RWPE1 (cell line): ENCODE measurements at regions of chr12 and their contacts with region 1.

Region 1: DNA sequence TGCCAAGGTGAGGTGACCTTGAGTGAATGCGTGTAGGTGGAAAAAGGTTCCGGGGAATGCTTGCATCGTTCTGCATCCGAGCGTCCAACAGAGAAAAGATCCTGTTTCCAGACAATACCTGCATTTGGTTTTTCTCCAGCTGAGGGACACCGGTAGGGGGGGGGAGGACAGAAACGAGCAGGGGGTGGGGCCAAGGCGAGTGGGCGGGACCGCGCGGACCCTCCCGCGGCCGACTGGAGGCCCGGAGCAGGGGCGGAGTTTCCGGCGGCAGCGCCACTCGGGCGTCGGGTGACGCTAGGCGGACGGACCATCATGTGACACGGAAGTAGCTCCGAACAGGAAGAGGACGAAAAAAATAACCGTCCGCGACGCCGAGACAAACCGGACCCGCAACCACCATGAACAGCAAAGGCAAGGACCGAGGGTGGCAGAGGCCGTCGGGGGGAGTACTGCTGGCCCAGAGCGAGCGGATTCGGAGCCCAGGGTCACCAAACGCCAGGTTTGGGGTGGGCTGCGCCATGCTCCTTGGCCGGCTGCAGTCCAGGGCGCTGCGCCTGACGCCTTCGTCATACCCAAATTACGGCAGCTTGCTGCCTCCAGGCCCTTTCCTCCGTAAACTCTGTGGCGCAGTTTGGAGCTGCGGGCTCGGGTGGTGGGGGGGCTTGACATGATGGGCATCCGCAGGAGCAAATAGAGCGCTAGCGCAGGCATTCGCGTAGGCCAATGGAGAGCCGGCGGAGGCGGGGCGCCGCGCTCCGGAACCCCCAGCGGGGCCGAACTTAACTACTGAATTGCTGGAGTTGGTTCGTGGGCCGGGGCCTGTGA is at the start of gene DAZAP2:
- DNase-seq: peak; percentile 98
- H3K27ac ChIP-seq: peak within 1 kb of the TSS; percentile 97
- CTCF ChIP-seq: peak; percentile 24; the same call in 1 of the 2 replicates

Region 2: GRCh38 chr12:51047655-51048540 is 190.8 kb before region 1 on chr12 and contains the start of gene LETMD1:
- CTCF ChIA-PET with region 1: no interaction called
- POLR2A ChIA-PET with region 1: interaction called, 11 read pairs
- DNase-seq: peak; percentile 98
- H3K27ac ChIP-seq: peak within 1 kb of the TSS; percentile 89
- CTCF ChIP-seq: peak; percentile 94

Region 3: DNA sequence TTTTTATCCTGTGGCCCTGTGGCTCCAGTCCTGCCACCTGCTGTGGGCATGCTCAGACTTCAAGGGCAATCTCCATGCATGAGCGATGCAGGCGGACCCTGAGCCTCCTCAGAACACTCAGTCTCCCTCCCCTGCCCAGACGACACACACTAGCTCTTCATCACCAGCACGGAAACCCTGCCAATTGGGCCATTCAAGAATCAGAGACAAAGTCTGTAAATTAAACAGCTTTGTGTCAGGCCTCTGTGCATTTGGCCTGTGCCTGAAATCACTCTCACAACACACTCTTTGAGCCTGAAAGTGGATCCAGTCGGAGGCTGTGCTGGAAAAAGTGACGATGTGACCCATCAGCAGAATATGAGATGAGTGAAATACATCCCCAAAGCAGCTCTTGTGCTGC is 33.4 kb before region 1 on chr12:
- CTCF ChIA-PET with region 1: no interaction called
- POLR2A ChIA-PET with region 1: no interaction called
- DNase-seq: no peak
- H3K27ac ChIP-seq: no peak overlapping the region; the same call in 1 of the 2 replicates
- CTCF ChIP-seq: no peak

Region 4: GRCh38 chr12:51281202-51281924 is 42.6 kb after region 1 on chr12:
- CTCF ChIA-PET with region 1: interaction called, 10 read pairs
- POLR2A ChIA-PET with region 1: no interaction called
- DNase-seq: peak; percentile 60
- H3K27ac ChIP-seq: no peak overlapping the region
- CTCF ChIP-seq: no peak

Region 5: GRCh38 chr12:51460519-51460918 is 221.8 kb after region 1 on chr12:
- CTCF ChIA-PET with region 1: no interaction called
- POLR2A ChIA-PET with region 1: no interaction called
- DNase-seq: no peak
- H3K27ac ChIP-seq: no peak overlapping the region
- CTCF ChIP-seq: no peak